ENCODE measurements at regions of chr1 and their contacts with region 1.

Region 1: GRCh38 chr1:151399890-151400495 is 620 bp downstream of the PSMB4 start:
- DNase-seq: peak; percentile 20
- H3K4me3 ChIP-seq: peak overlapping the region; percentile 64 to 85 (median 80)
- H3K27ac ChIP-seq: peak overlapping the region; percentile 88
- H3K4me1 ChIP-seq: peaks cover 13% of the 10 kb centered on the region
- H3K27me3 ChIP-seq: no peaks in the 10 kb centered on the region
- CTCF ChIP-seq: no peak

Region 2: DNA sequence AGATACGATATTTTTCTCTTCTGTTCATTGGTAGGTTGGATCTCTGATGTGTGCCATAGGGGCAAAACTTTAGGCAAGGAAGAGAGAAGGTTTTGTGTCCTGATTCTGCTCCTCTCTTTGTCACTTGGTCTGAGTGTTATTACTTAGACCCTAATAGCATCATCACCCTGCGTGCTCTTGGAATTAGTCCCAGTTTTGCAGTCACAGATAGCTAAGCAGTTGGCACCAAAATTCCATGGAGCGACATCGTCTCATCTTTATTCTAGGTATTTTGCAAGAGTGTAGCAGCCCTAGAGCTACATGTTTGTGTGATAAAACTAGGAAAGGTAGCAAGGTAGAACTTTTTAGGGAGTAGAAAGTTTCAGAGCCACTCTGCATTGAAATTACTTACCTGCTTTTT is 177.9 kb before region 1 on chr1:
- CTCF ChIA-PET with region 1: no interaction called
- dilution Hi-C with region 1: no loop called
- in situ Hi-C with region 1: no loop called
- intact Hi-C with region 1: no loop called
- DNase-seq: no peak
- H3K4me3 ChIP-seq: no peak overlapping the region
- H3K27ac ChIP-seq: no peak overlapping the region
- H3K4me1 ChIP-seq: peaks cover 4% of the 10 kb centered on the region
- H3K27me3 ChIP-seq: no peaks in the 10 kb centered on the region
- CTCF ChIP-seq: no peak

Region 3: DNA sequence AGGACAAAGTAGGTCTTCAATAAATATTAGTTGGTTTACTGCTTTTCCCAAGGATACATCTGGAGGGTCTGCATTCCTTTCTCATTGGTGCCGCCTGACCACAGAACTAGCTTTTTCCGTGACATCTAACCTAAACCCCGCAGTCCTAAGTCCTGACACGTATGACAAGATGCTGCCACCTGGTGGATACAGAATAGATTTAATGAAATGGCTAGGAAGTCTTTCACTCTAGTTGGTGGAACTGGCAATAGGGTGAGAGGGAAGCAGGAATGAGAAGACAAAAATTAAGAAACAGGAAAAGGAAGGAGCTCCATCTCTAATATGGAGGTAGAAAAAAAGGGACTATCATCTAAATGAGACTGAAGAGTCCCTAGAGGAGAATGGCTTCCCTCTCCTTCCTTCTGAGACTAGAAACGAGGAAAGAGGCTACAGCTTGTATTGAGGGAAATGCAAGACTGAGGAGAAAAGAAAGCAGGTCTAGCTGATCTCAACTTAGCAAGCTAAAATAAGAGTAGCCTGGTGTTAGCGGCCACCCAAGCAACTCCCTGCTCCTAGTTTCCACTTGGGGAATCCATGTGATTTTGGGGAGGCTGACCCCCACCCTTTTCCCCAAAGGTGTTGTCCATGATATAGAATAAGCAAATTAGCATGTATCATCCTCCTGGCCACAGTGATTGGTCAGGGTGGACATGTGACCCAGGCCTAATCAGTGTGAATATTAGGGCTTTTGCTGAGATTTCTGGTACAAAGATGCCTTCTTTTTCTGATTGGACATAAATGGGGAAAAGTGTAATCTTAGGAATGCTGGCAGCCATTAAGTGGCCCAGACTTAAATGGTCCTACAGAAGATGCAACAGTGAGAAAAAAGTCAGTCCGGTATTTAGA is 58.9 kb before region 1 on chr1:
- CTCF ChIA-PET with region 1: no interaction called
- dilution Hi-C with region 1: no loop called
- in situ Hi-C with region 1: no loop called
- intact Hi-C with region 1: loop called (anchors 5 kb)
- DNase-seq: peak; percentile 72
- H3K4me3 ChIP-seq: no peak overlapping the region
- H3K27ac ChIP-seq: no peak overlapping the region
- H3K4me1 ChIP-seq: peaks cover 4% of the 10 kb centered on the region
- H3K27me3 ChIP-seq: no peaks in the 10 kb centered on the region
- CTCF ChIP-seq: peak; percentile 71 to 72

Region 4: DNA sequence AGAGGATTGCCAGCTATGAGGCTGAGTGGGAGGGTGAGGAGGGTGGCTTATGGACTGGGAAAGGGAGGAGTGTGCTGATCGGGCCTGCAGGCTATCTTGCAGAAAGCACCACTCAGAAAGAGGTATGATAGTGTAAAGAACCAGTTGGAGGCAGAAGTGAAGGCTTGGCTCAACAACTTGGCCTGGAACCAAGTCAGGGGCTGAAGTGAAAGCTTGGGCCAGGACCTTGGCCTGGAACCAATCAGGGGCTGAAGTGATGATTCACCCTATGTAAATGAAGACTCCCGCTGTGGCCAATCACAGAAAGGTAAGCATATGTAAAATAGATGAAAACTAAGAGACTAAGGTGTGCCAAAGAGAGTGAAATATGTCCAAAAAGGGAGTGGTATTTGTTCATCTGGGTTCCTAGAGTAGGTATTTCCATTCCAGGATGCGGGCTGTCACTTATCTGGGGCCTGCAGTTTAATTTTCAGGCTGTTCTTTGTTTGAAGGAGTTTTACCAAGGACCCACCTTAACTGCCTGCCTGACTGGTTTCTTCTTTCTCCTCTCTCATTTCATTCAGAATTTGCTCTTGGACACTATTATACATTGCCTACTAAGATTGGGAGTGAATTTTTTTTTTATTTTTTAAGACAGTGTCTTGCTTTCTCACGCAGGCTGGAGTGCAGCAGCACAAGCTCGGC is 47.8 kb before region 1 on chr1:
- CTCF ChIA-PET with region 1: no interaction called
- dilution Hi-C with region 1: loop called (anchors 10 kb)
- in situ Hi-C with region 1: no loop called
- intact Hi-C with region 1: no loop called
- DNase-seq: peak; percentile 52
- H3K4me3 ChIP-seq: no peak overlapping the region
- H3K27ac ChIP-seq: no peak overlapping the region
- H3K4me1 ChIP-seq: peaks cover 7% of the 10 kb centered on the region
- H3K27me3 ChIP-seq: no peaks in the 10 kb centered on the region
- CTCF ChIP-seq: no peak

Region 5: DNA sequence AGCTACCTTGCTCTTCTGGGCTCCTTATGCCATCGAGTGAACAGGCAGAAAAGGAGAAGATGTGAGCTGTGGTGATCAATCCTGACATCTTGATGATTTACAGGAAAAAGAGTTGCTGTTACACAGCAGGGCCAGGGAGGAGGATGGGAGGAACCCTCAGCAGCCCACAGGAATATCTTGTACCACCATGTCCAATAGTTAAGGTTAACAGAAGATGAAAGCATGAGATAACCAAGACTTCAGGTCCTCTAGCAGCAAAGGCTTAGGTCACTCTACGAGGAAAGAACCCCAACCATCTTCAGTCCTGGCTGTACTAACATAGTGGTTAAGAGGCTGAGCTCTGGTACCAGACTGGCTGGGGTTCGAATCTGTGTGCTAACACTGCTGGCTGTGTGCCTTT is 15.4 kb before region 1 on chr1:
- CTCF ChIA-PET with region 1: interaction called, 14 read pairs
- dilution Hi-C with region 1: no loop called
- in situ Hi-C with region 1: no loop called
- intact Hi-C with region 1: no loop called
- DNase-seq: no peak
- H3K4me3 ChIP-seq: no peak overlapping the region
- H3K27ac ChIP-seq: no peak overlapping the region
- H3K4me1 ChIP-seq: peaks cover 9% of the 10 kb centered on the region
- H3K27me3 ChIP-seq: no peaks in the 10 kb centered on the region
- CTCF ChIP-seq: no peak